Psoas muscle (tissue), 8 donors: ENCODE measurements at regions of chr18 and their contacts with region 1.

Region 1: GRCh38 chr18:13268158-13269012 is 49.8 kb downstream of the LDLRAD4 start:
- DNase-seq: no peak
- ATAC-seq: peak in 1 of 4 donors; percentile 33
- H3K4me3 ChIP-seq: peak overlapping the region; percentile 13
- H3K27ac ChIP-seq: peak overlapping the region; percentile 12
- H3K4me1 ChIP-seq: peaks cover 59% of the 10 kb centered on the region
- H3K27me3 ChIP-seq: no peaks in the 10 kb centered on the region
- CTCF ChIP-seq: no peak

Region 2: GRCh38 chr18:13227910-13228309 is 40.5 kb before region 1 on chr18:
- intact Hi-C with region 1: loop called (anchors 2 to 5 kb)
- DNase-seq: no peak
- ATAC-seq: no peak
- H3K4me3 ChIP-seq: no peak overlapping the region
- H3K27ac ChIP-seq: no peak overlapping the region
- H3K4me1 ChIP-seq: peaks cover 34% of the 10 kb centered on the region
- H3K27me3 ChIP-seq: no peaks in the 10 kb centered on the region
- CTCF ChIP-seq: no peak

Region 3: GRCh38 chr18:13375302-13376255 is 107.2 kb after region 1 on chr18:
- intact Hi-C with region 1: loop called in 1 of 2 experiments (anchors 5 kb)
- DNase-seq: peak; percentile 79 to 84
- ATAC-seq: peak; percentile 67 to 71 (median 67)
- H3K4me3 ChIP-seq: no peak overlapping the region
- H3K27ac ChIP-seq: peak overlapping the region; percentile 70
- H3K4me1 ChIP-seq: peaks cover 51% of the 10 kb centered on the region
- H3K27me3 ChIP-seq: no peaks in the 10 kb centered on the region
- CTCF ChIP-seq: no peak

Region 4: DNA sequence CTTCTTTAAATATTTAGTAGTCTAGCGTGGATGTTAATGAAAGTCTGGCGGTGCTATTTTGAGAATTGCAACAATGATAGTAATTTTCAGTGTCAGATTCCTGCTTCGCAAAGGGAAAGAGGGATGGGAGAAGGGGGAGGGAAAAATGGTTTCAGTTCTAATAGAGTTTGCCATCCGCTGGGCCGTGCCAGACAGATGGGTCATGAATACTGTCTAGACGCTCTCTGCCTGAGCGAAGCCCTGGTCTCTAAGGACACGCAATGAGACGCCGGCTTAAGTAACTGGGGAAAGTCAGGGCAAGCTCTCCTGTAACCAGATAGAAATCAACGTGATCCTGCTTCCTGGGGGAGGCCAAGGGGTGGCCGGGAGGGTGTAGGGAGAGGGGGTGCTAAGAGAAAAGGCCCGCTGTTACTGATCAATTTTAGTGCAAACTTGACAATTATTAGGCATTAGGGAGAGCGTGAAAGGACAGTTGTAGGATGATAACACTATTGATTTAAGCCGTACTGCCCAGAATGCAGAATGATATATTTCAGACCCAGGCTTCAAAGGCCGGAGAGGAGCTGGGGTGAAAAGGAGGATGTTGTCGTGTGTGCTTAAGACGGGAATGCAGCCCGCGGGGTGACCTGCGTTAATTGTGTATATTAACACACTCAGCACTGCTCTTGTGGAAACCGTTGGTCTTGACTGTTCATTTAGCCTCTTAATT is 179.4 kb after region 1 on chr18:
- intact Hi-C with region 1: loop called in 1 of 2 experiments (anchors 10 kb)
- DNase-seq: peak; percentile 71 to 82
- ATAC-seq: peak; percentile 87 to 91 (median 89)
- H3K4me3 ChIP-seq: peak overlapping the region; percentile 40
- H3K27ac ChIP-seq: peak overlapping the region; percentile 28
- H3K4me1 ChIP-seq: peaks cover 46% of the 10 kb centered on the region
- H3K27me3 ChIP-seq: no peaks in the 10 kb centered on the region
- CTCF ChIP-seq: no peak